ENCODE measurements at regions of chr12 and their contacts with region 1.

Region 1: GRCh38 chr12:57238854-57239554 is 9.5 kb downstream of the SHMT2 start:
- DNase-seq: peak; percentile 71
- H3K4me3 ChIP-seq: peak overlapping the region; percentile 62 to 66 (median 63)
- H3K27ac ChIP-seq: no peak overlapping the region
- H3K4me1 ChIP-seq: peaks cover 44% of the 10 kb centered on the region
- H3K27me3 ChIP-seq: peaks cover 4% of the 10 kb centered on the region
- CTCF ChIP-seq: peak; percentile 99 to 100

Region 2: DNA sequence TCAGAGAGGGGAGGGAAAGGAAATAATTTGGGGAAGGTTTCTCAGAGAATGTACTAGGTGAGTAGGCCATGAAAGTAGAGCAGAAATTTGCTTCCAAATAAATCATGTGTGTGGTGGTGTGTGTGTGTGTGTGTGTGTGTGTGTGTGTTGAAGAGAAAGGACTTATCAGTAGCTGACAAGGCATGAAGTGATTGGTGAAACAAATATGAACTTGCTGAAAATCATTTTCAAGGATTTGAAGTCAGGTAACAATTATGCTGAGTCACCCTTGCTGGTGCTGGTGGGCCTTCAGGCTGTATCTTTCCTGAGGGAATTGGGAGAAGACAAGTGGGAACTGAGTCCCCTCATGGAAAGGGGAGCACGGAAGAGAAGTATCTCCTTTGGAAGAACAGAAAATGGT is 420.4 kb before region 1 on chr12:
- CTCF ChIA-PET with region 1: no interaction called
- dilution Hi-C with region 1: no loop called
- in situ Hi-C with region 1: no loop called
- intact Hi-C with region 1: no loop called
- DNase-seq: peak; percentile 12
- H3K4me3 ChIP-seq: no peak overlapping the region
- H3K27ac ChIP-seq: no peak overlapping the region
- H3K4me1 ChIP-seq: no peaks in the 10 kb centered on the region
- H3K27me3 ChIP-seq: no peaks in the 10 kb centered on the region
- CTCF ChIP-seq: no peak

Region 3: DNA sequence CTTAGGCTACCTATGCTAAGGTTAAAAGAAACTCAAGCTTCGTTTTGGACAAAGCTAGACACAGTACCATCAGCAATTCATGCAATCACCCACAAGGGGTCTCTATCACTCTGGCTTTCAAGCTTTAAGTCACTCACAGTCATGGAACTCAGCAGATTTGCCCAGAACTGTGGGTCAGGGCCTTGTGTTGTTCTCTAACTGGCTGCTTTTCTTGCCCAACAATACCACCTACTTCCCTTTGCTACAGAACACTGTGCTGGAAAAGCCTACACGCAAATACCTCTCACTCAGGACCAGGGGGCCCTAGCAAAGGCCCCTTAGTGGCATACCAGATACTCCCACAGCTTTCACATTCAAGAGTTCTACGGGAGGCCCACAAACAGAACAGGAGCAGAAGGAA is 169.5 kb before region 1 on chr12:
- CTCF ChIA-PET with region 1: no interaction called
- dilution Hi-C with region 1: no loop called
- in situ Hi-C with region 1: no loop called
- intact Hi-C with region 1: loop called (anchors 5 kb)
- DNase-seq: peak; percentile 63
- H3K4me3 ChIP-seq: no peak overlapping the region
- H3K27ac ChIP-seq: no peak overlapping the region
- H3K4me1 ChIP-seq: peaks cover 9% of the 10 kb centered on the region
- H3K27me3 ChIP-seq: no peaks in the 10 kb centered on the region
- CTCF ChIP-seq: peak; percentile 83 to 90

Region 4: GRCh38 chr12:57088459-57089248 is 150.3 kb before region 1 on chr12 and contains the start of gene NAB2:
- CTCF ChIA-PET with region 1: no interaction called
- dilution Hi-C with region 1: no loop called
- in situ Hi-C with region 1: no loop called
- intact Hi-C with region 1: loop called (anchors 1 kb)
- DNase-seq: peak; percentile 90
- H3K4me3 ChIP-seq: peak within 1 kb of the TSS; percentile 72 to 96 (median 88)
- H3K27ac ChIP-seq: peak within 1 kb of the TSS; percentile 97
- H3K4me1 ChIP-seq: peaks cover 60% of the 10 kb centered on the region
- H3K27me3 ChIP-seq: no peaks in the 10 kb centered on the region
- CTCF ChIP-seq: no peak
- total RNA-seq, gene NAB2: 33.8 to 35.3 TPM

Region 5: GRCh38 chr12:57124259-57124877 is 114.6 kb before region 1 on chr12:
- CTCF ChIA-PET with region 1: interaction called, 4 read pairs
- dilution Hi-C with region 1: no loop called
- in situ Hi-C with region 1: no loop called
- intact Hi-C with region 1: loop called (anchors 2 kb)
- DNase-seq: peak; percentile 55
- H3K4me3 ChIP-seq: no peak overlapping the region
- H3K27ac ChIP-seq: no peak overlapping the region
- H3K4me1 ChIP-seq: peaks cover 10% of the 10 kb centered on the region
- H3K27me3 ChIP-seq: no peaks in the 10 kb centered on the region
- CTCF ChIP-seq: peak; percentile 91 to 95

Region 6: GRCh38 chr12:57182921-57183790 is 55.8 kb before region 1 on chr12:
- CTCF ChIA-PET with region 1: no interaction called
- dilution Hi-C with region 1: loop called (anchors 10 kb)
- in situ Hi-C with region 1: no loop called
- intact Hi-C with region 1: no loop called
- DNase-seq: peak; percentile 79
- H3K4me3 ChIP-seq: no peak overlapping the region
- H3K27ac ChIP-seq: no peak overlapping the region
- H3K4me1 ChIP-seq: peaks cover 22% of the 10 kb centered on the region
- H3K27me3 ChIP-seq: no peaks in the 10 kb centered on the region
- CTCF ChIP-seq: peak; percentile 91 to 96

Region 7: GRCh38 chr12:57213058-57213715 is 25.8 kb before region 1 on chr12:
- CTCF ChIA-PET with region 1: interaction called, 6 read pairs
- dilution Hi-C with region 1: loop called (anchors 5 kb)
- in situ Hi-C with region 1: no loop called
- intact Hi-C with region 1: loop called (anchors 1 kb)
- DNase-seq: peak; percentile 68
- H3K4me3 ChIP-seq: no peak overlapping the region
- H3K27ac ChIP-seq: no peak overlapping the region
- H3K4me1 ChIP-seq: peaks cover 15% of the 10 kb centered on the region
- H3K27me3 ChIP-seq: peaks cover 6% of the 10 kb centered on the region
- CTCF ChIP-seq: peak; percentile 95 to 96

Measured in mammary epithelial cell (primary cell).